Transverse colon (tissue), 4 donors: ENCODE measurements at regions of chr3 and their contacts with region 1.

Region 1: DNA sequence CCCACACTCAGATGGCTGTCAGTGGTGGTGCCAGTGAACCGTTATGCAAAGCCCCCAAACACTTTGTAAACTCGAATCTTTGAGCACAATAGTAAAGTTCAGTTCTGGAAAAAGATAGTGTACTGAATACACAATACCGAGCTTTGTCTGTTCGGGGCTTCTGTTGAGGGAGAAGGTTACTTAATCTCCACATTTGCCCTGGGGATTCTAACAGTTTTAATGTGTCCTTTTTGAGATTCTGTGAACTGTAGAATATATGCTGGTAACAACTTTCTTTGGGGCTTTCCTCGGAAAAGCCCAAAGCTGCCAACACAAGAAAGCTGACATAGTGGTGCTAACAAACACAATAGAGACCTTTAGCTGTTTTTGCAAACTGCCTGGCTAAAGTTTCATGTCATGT is 686.5 kb downstream of the ROBO1 start:
- DNase-seq: no peak
- H3K4me3 ChIP-seq: no peak overlapping the region
- H3K27ac ChIP-seq: no peak overlapping the region
- H3K4me1 ChIP-seq: no peaks in the 10 kb centered on the region
- H3K27me3 ChIP-seq: no peaks in the 10 kb centered on the region
- CTCF ChIP-seq: no peak
- EP300 ChIP-seq: no peak
- POLR2A ChIP-seq: no peak

Region 2: DNA sequence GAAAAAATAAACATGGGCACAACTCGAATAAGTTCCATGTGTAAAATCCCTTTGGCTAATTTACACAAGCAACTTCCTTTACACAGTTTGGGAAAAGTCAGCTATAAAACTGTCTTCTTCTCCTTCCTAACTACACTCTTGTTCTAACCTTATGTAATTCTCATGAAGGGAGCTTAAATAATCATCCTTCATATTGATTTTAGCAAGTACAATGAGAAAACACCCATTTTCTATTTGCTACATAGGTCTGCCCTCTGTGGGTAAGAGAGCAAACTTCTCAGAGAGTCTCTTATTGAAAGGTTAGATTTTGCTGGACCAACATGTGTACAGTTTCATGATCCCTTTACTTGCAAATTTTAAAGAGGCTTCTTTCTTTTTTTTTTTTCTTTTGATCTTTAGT is 288.0 kb after region 1 on chr3:
- in situ Hi-C with region 1: loop called (anchors 25 kb)
- intact Hi-C with region 1: loop called (anchors 5 kb)
- DNase-seq: no peak
- H3K4me3 ChIP-seq: no peak overlapping the region
- H3K27ac ChIP-seq: no peak overlapping the region
- H3K4me1 ChIP-seq: peaks cover 0 to 4% (median 0%) of the 10 kb centered on the region in 4 donors
- H3K27me3 ChIP-seq: no peaks in the 10 kb centered on the region
- CTCF ChIP-seq: no peak
- EP300 ChIP-seq: no peak
- POLR2A ChIP-seq: no peak